Panc1 (cell line): ENCODE measurements at regions of chr12 and their contacts with region 1.

Region 1: DNA sequence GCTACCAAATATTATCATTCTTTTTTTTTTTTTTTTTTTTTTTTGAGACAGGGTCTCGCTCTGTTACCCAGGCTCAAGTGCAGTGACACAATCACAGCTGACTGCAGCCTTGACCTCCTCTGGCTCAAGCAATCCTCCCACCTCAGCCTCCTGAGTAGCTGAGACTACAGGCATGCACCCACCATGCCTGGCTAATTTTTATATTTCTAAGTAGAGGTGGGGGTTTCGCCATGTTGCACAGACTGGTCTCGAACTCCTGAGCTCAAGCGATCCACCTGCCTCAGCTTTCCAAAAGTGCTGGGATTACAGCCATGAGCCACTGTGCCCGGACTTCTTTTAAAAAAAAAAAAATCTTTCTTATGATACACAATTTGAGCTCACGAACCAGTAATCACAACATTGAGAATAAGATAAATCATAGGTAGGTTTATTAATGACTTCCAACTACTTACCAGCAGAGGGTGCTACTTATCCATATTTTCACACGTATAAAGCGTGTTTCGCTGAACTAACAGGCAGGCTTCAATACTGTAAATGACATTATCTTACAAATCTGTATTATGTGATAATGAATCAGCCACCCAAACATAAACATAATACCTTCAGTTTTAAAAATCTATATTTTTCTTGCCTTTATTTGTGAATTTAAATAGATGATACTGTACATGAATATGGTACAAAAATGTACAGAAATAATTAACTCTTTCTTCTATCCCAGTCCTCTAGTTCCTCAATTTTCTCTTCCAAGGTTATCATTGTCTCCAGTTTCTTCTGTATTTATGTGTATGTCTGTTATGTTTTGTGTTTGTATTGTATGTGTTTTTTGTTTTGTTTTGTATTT is 42.5 kb upstream of the BCAT1 start:
- DNase-seq: peak; percentile 71
- ATAC-seq: peak; percentile 93
- H3K4me3 ChIP-seq: no peak overlapping the region
- H3K27ac ChIP-seq: no peak overlapping the region
- H3K4me1 ChIP-seq: no peaks in the 10 kb centered on the region
- H3K27me3 ChIP-seq: peaks cover 14% of the 10 kb centered on the region
- CTCF ChIP-seq: peak; percentile 79

Region 2: GRCh38 chr12:25130741-25131188 is 139.3 kb after region 1 on chr12:
- CTCF ChIA-PET with region 1: interaction called, 9 read pairs
- POLR2A ChIA-PET with region 1: no interaction called
- in situ Hi-C with region 1: no loop called
- intact Hi-C with region 1: loop called (anchors 1 kb)
- DNase-seq: peak; percentile 24
- ATAC-seq: peak; percentile 73
- H3K4me3 ChIP-seq: no peak overlapping the region
- H3K27ac ChIP-seq: no peak overlapping the region
- H3K4me1 ChIP-seq: no peaks in the 10 kb centered on the region
- H3K27me3 ChIP-seq: 0 out of 2 replicates have a peak, but pooled peaks cover 4% of the 10 kb centered on the region
- CTCF ChIP-seq: peak; percentile 27; the same call in 1 of the 2 replicates

Region 3: DNA sequence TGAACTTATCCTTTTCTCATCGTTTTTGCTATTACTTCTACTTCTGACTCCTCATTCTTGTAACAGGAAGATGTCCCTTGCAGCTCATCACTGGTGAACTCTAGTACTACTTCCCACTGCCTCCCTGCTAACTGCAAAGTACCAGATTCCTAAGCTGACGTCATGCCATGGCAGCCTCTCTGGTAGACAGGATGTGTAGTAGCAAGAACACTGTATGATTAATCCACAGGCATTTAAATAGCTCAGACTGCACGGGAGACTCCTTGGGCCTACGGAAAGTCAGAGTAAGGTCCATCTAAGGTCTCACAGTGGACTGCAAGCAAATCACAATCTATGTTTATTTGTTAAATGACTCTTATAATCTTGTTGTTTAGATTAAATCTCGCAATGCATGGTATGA is 160.0 kb after region 1 on chr12:
- CTCF ChIA-PET with region 1: interaction called, 4 read pairs
- POLR2A ChIA-PET with region 1: no interaction called
- in situ Hi-C with region 1: no loop called
- intact Hi-C with region 1: loop called (anchors 1 kb)
- DNase-seq: peak; percentile 75
- ATAC-seq: peak; percentile 78
- H3K4me3 ChIP-seq: no peak overlapping the region
- H3K27ac ChIP-seq: no peak overlapping the region
- H3K4me1 ChIP-seq: no peaks in the 10 kb centered on the region
- H3K27me3 ChIP-seq: no peaks in the 10 kb centered on the region
- CTCF ChIP-seq: no peak

Region 4: DNA sequence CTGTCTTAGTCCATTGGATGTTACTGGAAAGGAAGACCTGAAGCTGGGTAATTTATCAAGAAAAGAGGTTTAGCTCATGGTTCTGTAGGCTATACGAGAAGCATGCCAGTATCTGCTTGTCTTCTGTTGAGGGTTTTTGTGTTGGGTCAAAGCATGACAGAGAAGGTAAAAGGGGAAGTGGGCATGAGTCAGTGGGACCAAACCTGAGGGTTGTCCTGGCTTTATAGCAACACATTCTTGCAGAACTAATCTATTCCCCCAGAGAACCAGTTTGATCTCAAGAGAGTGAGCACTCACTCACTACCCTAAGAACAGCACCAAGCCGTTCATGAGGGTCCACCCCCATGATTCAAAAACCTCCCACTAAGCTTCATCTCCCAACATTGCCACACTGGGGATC is 278.3 kb after region 1 on chr12:
- CTCF ChIA-PET with region 1: no interaction called
- POLR2A ChIA-PET with region 1: no interaction called
- in situ Hi-C with region 1: no loop called
- intact Hi-C with region 1: no loop called
- DNase-seq: no peak
- ATAC-seq: no peak
- H3K4me3 ChIP-seq: no peak overlapping the region
- H3K27ac ChIP-seq: no peak overlapping the region
- H3K4me1 ChIP-seq: no peaks in the 10 kb centered on the region
- H3K27me3 ChIP-seq: peaks cover 12% of the 10 kb centered on the region; the same call in 1 of the 2 replicates
- CTCF ChIP-seq: no peak